Astrocyte of the cerebellum (primary cell): ENCODE measurements at regions of chr7 and their contacts with region 1.

Region 1: DNA sequence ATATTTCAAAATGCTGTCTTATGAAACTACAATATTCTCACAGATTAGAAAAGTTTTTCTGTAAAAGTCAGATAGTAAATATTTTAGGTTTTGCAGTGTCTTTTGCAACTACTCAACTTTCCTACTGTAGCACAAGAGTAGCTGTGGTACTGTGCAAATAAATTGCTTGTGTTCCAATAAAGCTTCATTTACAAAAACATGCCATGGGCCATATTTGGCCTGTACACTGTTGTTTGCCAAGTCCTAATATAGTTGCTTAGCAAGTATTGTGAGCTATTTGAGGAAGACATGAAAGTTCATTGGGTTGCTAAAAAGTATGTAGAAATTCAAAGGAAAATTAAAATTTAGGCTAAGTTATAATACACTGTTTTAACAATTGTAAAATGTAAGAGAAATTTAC is 80.0 kb downstream of the TFPI2 start:
- DNase-seq: no peak
- H3K4me3 ChIP-seq: no peak overlapping the region
- CTCF ChIP-seq: no peak

Region 2: DNA sequence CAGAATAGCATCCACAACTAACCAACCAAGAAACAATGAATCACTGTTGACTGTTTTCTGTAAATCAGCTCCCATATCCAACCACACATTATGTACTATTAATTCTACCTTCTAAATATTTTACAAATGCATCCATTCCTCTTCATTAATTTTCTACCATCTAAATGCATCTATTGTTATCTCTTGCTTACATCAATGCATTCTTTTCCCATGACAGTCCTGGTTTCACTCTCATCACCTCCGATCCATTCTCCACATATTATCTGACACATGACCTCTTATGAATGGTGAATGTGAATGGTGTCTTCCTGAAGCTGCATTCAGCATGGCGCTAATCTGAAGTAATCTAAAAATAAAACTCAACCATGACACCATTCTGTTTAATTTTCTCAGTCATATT is 82.3 kb before region 1 on chr7:
- in situ Hi-C with region 1: no loop called
- DNase-seq: no peak
- H3K4me3 ChIP-seq: no peak overlapping the region
- CTCF ChIP-seq: no peak

Region 3: GRCh38 chr7:93779115-93779514 is 31.4 kb before region 1 on chr7:
- in situ Hi-C with region 1: loop called (anchors 5 kb)
- DNase-seq: no peak
- H3K4me3 ChIP-seq: no peak overlapping the region
- CTCF ChIP-seq: no peak